Activated CD8-positive, alpha-beta memory T cell treated with anti-CD3 and anti-CD28 coated beads, Interleukin-2, amount 10 ng/mL, durations not matched to agents 7 days and 5 days (primary cell): ENCODE measurements at regions of chr14 and their contacts with region 1.

Region 1: DNA sequence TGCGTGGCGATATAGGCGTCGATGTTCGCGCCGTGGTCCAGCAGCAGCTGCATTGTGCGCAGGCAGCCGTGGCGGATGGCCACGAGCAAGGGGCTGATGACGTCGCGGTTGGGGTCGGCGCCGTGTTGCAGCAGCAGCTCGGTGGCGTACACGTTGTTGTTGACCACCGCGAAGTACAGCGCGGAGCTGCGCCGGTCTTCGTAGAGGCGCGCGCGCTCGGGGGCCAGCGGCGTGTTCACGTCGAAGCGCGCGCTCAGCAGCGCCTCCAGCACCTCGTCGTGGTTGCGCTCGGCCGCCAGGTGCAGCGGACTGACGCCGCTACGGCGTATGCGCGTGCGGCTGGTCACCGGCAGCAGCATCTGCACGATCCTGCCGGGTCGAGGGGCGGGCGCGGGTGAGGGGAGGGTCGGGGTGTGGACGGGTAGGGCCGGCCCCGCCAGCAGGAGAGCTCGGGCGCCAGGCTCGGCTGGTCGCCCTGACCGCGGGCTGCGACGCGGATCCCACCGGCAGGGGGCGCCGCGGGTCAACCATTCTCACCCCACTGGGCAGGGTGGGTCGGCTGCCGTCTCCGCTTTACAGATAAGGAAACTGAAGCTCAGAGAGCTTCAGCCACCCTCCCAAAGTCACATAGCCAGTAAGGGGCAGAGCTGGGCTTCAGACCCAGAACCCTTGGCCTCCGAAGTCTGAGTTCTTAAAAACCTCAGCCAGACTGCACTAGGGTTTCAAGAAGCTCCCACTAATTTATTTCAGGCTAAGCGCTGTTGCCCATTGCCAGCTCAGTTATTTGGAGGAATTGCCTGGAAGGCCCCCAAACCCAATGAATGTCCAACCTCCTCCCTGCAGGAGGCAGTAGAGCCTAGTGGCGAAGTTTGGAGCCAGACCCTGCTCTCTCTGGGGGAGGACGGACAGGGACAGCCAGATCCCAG is 12.4 kb downstream of the FAM181A start:
- DNase-seq: peak; percentile 92
- ATAC-seq: peak; percentile 97
- H3K4me3 Mint-ChIP-seq: peak overlapping the region; percentile 46
- H3K27ac Mint-ChIP-seq: peak overlapping the region; percentile 74
- H3K4me1 Mint-ChIP-seq: peaks cover 32% of the 10 kb centered on the region
- H3K27me3 Mint-ChIP-seq: no peaks in the 10 kb centered on the region

Region 2: GRCh38 chr14:93789228-93790130 is 150.1 kb before region 1 on chr14:
- CTCF ChIA-PET with region 1: no interaction called
- DNase-seq: no peak
- ATAC-seq: no peak
- H3K4me3 Mint-ChIP-seq: no peak overlapping the region
- H3K27ac Mint-ChIP-seq: no peak overlapping the region
- H3K4me1 Mint-ChIP-seq: peaks cover 2% of the 10 kb centered on the region
- H3K27me3 Mint-ChIP-seq: peaks cover 71% of the 10 kb centered on the region

Region 3: GRCh38 chr14:93916508-93916907 is 23.1 kb before region 1 on chr14:
- CTCF ChIA-PET with region 1: interaction called, 20 read pairs
- DNase-seq: no peak
- ATAC-seq: no peak
- H3K4me3 Mint-ChIP-seq: no peak overlapping the region
- H3K27ac Mint-ChIP-seq: no peak overlapping the region
- H3K4me1 Mint-ChIP-seq: peaks cover 15% of the 10 kb centered on the region
- H3K27me3 Mint-ChIP-seq: peaks cover 4% of the 10 kb centered on the region

Region 4: GRCh38 chr14:93970549-93970946 is 31.0 kb after region 1 on chr14:
- CTCF ChIA-PET with region 1: interaction called, 307 read pairs
- DNase-seq: peak; percentile 80
- ATAC-seq: peak; percentile 62
- H3K4me3 Mint-ChIP-seq: peak overlapping the region; percentile 83
- H3K27ac Mint-ChIP-seq: peak overlapping the region; percentile 97
- H3K4me1 Mint-ChIP-seq: peaks cover 90% of the 10 kb centered on the region
- H3K27me3 Mint-ChIP-seq: no peaks in the 10 kb centered on the region

Region 5: GRCh38 chr14:94001501-94002396 is 62.2 kb after region 1 on chr14:
- CTCF ChIA-PET with region 1: interaction called, 297 read pairs
- DNase-seq: peak; percentile 72
- ATAC-seq: peak; percentile 87
- H3K4me3 Mint-ChIP-seq: no peak overlapping the region
- H3K27ac Mint-ChIP-seq: peak overlapping the region; percentile 17
- H3K4me1 Mint-ChIP-seq: peaks cover 33% of the 10 kb centered on the region
- H3K27me3 Mint-ChIP-seq: no peaks in the 10 kb centered on the region

Region 6: DNA sequence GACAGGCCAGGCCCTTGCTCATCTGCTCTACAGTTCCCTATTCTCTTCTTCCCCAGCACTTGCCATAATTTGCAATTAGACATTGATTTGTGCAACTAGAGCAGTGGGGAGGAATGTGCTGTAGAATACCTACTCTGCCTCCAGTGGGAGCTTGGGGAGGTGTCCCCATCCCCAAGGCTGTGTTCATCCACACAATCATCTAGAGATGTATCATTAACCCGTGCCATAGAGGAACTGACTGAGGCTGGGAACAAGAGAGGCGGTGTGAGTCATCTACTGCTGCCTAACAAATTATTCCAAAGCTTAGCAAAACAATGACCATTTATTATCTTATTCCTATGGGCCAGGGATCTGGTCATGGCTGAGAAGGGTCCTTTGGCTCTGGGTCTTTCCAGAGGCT is 81.4 kb after region 1 on chr14:
- CTCF ChIA-PET with region 1: interaction called, 87 read pairs
- DNase-seq: no peak
- ATAC-seq: no peak
- H3K4me3 Mint-ChIP-seq: no peak overlapping the region
- H3K27ac Mint-ChIP-seq: peak overlapping the region; percentile 76
- H3K4me1 Mint-ChIP-seq: peaks cover 42% of the 10 kb centered on the region
- H3K27me3 Mint-ChIP-seq: peaks cover 8% of the 10 kb centered on the region

Region 7: DNA sequence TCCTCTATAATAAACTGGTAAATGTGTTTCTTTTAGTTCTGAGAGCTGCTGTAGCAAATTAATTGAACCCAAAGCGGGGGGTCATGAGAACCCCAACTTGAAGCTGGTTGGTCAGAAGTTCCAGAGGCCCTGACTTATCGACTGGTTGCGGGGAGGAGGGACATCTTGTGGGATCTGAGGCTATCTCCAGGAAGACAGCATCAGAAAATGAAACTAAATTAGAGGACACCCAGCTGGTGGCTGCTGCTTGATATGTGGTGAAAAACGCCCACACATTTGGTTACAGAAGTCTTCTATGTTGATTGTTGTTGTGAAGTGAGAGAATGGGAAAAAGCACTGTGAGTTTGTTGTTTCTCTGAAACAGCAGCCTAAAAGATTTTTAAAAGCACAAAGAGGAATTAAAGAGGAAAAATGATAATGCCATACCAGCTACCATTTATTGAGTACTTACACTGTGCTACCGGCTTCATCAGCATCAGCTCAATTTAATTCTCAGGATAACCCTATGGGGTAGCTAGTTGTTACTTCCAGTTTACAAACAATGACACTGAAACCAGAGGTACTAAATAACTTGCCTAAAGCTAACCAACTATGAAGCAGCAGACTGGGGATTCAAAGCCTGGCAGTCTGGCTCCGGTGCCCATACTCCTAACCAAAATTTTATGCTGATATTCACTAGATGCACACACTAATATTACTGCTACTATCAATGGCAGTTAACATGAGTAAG is 117.2 kb after region 1 on chr14:
- CTCF ChIA-PET with region 1: interaction called, 14 read pairs
- DNase-seq: peak; percentile 80
- ATAC-seq: peak; percentile 84
- H3K4me3 Mint-ChIP-seq: peak overlapping the region; percentile 10
- H3K27ac Mint-ChIP-seq: peak overlapping the region; percentile 72
- H3K4me1 Mint-ChIP-seq: peaks cover 66% of the 10 kb centered on the region
- H3K27me3 Mint-ChIP-seq: no peaks in the 10 kb centered on the region

Region 8: DNA sequence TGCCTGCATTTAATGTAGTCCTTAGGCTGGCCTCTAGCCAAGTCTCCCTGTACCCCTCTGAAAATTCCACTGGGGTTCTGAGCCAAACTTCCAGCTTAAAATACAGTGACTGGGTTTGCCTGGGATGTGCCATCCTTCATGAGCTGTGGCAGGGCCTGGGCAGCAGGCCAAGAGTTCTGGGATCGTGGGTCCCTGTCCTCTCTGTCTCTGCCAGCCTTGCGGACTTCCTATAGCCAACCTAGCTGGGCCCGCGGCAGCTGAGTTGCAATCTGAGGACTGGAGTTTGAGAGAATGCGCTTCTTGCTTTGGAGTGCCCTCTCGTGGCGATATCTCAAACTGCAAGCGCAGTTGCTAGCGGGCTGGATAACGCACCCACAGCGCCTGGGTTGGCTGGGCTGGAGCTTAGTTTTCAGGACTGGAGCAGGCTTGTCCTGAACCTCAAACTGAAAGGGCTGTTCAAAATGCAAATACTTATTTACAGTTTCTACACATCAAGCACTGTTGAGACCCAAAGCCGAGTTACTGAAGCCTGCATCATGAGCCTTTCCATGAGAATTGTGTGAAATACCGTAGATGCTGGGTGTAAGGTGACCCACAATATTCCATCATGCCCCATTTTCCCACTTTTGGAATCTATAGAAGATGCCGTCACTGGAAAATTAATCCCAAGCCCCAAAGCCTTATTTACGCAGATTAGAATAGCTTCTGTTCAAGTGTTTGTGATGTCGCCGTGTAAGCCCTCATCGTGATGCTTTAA is 197.2 kb after region 1 on chr14:
- CTCF ChIA-PET with region 1: interaction called, 37 read pairs
- DNase-seq: peak; percentile 91
- ATAC-seq: peak; percentile 87
- H3K4me3 Mint-ChIP-seq: no peak overlapping the region
- H3K27ac Mint-ChIP-seq: no peak overlapping the region
- H3K4me1 Mint-ChIP-seq: peaks cover 5% of the 10 kb centered on the region
- H3K27me3 Mint-ChIP-seq: peaks cover 29% of the 10 kb centered on the region